ENCODE measurements at regions of chr12 and their contacts with region 1.

Region 1: GRCh38 chr12:13233830-13234641 is 37.5 kb downstream of the EMP1 start:
- DNase-seq: peak; percentile 77
- H3K4me3 Mint-ChIP-seq: no peak overlapping the region
- H3K27ac Mint-ChIP-seq: no peak overlapping the region
- H3K4me1 Mint-ChIP-seq: peaks cover 12% of the 10 kb centered on the region
- H3K27me3 Mint-ChIP-seq: no peaks in the 10 kb centered on the region
- CTCF ChIP-seq: peak; percentile 88

Region 2: DNA sequence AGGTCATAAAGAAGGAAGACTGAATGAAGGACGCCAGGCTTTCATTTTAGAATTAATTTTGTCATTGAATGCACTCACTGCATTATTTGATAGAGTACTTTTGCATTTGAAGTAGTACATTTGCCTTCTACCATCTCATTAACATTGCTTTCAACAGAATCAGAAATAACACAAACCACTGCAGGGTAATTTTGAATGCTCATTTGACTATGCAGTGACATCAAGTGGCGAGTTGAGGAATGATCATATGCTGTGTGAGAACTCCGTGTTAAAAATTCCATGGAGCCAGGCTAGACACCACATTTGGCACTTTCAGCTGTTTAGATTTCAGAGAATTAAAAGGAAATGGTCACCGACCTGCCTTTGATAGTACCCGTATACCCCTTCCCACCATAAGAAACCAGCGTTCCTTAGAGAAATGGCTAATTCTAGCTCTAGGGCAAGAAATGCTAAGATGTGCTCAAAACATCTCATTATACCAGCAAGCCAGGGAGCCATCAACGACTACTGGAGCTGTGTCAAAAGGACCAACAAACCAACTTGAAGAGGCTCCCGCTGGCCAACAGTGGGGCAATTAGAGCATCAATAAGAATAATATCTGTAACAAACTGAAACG is 250.5 kb before region 1 on chr12:
- CTCF ChIA-PET with region 1: interaction called, 10 read pairs
- POLR2A ChIA-PET with region 1: no interaction called
- intact Hi-C with region 1: loop called (anchors 1 kb)
- DNase-seq: peak; percentile 65
- H3K4me3 Mint-ChIP-seq: no peak overlapping the region
- H3K27ac Mint-ChIP-seq: peak overlapping the region; percentile 0
- H3K4me1 Mint-ChIP-seq: peaks cover 6% of the 10 kb centered on the region
- H3K27me3 Mint-ChIP-seq: no peaks in the 10 kb centered on the region
- CTCF ChIP-seq: peak; percentile 66

Region 3: GRCh38 chr12:12999959-13000615 is 233.9 kb before region 1 on chr12 and contains the start of gene HEBP1:
- CTCF ChIA-PET with region 1: interaction called, 3 read pairs
- POLR2A ChIA-PET with region 1: no interaction called
- intact Hi-C with region 1: loop called (anchors 2 kb)
- DNase-seq: peak; percentile 89
- H3K4me3 Mint-ChIP-seq: peak within 1 kb of the TSS; percentile 96
- H3K27ac Mint-ChIP-seq: peak within 1 kb of the TSS; percentile 84
- H3K4me1 Mint-ChIP-seq: peaks cover 33% of the 10 kb centered on the region
- H3K27me3 Mint-ChIP-seq: no peaks in the 10 kb centered on the region
- CTCF ChIP-seq: no peak
- total RNA-seq, gene HEBP1: 30.8 and 31.2 TPM in 2 replicates

Region 4: DNA sequence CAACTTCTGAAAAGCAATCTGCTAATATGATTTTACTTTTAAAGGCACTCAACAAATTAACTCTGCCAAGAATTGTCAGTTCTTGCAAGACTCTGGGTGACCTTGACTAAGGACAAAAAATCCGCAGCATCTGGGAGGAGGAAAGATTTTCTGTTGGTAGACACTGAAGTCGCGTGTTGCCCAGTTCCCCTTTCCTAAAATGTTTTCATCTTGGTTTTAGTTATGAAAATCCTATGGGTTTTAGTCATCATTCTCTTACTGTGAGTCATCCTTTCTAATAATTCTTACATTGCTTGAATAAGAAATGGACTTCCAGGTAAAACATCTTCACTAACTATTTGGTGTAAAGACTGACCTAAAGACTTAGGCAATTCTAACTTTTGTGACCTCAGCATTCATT is 139.7 kb before region 1 on chr12:
- CTCF ChIA-PET with region 1: interaction called, 4 read pairs
- POLR2A ChIA-PET with region 1: interaction called, 9 read pairs
- intact Hi-C with region 1: loop called (anchors 1 kb)
- DNase-seq: peak; percentile 40
- H3K4me3 Mint-ChIP-seq: peak overlapping the region; percentile 26
- H3K27ac Mint-ChIP-seq: peak overlapping the region; percentile 80
- H3K4me1 Mint-ChIP-seq: peaks cover 47% of the 10 kb centered on the region
- H3K27me3 Mint-ChIP-seq: no peaks in the 10 kb centered on the region
- CTCF ChIP-seq: no peak

Region 5: GRCh38 chr12:13223179-13223859 is 10.7 kb before region 1 on chr12:
- CTCF ChIA-PET with region 1: interaction called, 19 read pairs
- POLR2A ChIA-PET with region 1: interaction called, 4 read pairs
- intact Hi-C with region 1: no loop called
- DNase-seq: peak; percentile 92
- H3K4me3 Mint-ChIP-seq: peak overlapping the region; percentile 15
- H3K27ac Mint-ChIP-seq: peak overlapping the region; percentile 80
- H3K4me1 Mint-ChIP-seq: peaks cover 43% of the 10 kb centered on the region
- H3K27me3 Mint-ChIP-seq: no peaks in the 10 kb centered on the region
- CTCF ChIP-seq: no peak